ENCODE measurements at regions of chr4 and their contacts with region 1.

Region 1: DNA sequence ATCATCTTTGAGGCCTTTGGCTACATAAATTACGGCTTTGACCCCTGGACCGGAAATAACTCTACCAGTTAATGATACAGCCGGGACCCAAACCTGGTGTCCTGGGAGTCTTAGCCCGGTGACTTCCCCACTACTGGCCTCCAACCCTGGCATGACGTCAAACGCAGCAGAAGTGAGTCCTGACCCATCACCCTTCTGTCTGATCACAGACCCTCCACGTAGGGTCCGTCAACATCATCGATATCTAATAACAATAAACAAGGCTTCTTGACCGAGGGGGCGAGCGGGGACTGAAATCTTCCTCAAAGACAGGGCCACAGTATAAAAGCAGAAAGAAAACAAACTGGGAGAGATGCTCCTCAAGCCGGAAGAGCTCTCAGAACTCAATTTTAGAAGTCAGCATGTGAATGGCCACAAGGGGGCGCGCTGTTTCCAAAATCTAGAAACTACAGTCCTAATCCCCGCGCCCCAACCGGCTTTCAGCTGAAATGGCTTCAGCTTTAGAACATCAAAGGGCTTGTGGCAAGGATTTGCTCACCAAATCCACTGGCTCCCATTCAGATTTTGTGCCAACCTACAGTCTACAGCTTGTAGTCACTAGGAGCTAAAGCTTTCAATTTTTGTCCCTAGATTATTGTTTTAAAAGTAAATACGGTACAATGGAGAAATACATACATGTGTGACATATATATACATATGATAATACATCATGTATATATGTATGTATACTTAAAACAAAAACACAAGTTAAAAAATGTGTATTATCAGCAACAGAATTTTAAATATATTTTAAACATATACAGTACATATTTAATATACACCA is 46.4 kb upstream of the ENPP6 start:
- DNase-seq: peak; percentile 83 to 97 (median 93)
- ATAC-seq: peak; percentile 57
- H3K4me3 ChIP-seq: no peak overlapping the region
- H3K4me3 Mint-ChIP-seq: no peak overlapping the region
- H3K27ac ChIP-seq: no peak overlapping the region
- H3K27ac Mint-ChIP-seq: no peak overlapping the region
- H3K4me1 ChIP-seq: peaks cover 7% of the 10 kb centered on the region
- H3K4me1 Mint-ChIP-seq: peaks cover 29% of the 10 kb centered on the region
- H3K27me3 ChIP-seq: no peaks in the 10 kb centered on the region
- H3K27me3 Mint-ChIP-seq: no peaks in the 10 kb centered on the region
- CTCF ChIP-seq: peak; percentile 73

Region 2: GRCh38 chr4:183504064-183504929 is 759.8 kb before region 1 on chr4:
- CTCF ChIA-PET with region 1: no interaction called
- POLR2A ChIA-PET with region 1: no interaction called
- intact Hi-C with region 1: loop called in 1 of 2 experiments (anchors 10 kb)
- DNase-seq: peak; percentile 99 to 100 (median 99)
- ATAC-seq: peak; percentile 78
- H3K4me3 ChIP-seq: peak overlapping the region; percentile 95 to 98
- H3K4me3 Mint-ChIP-seq: peak overlapping the region; percentile 98
- H3K27ac ChIP-seq: peak overlapping the region; percentile 84 to 98
- H3K27ac Mint-ChIP-seq: peak overlapping the region; percentile 99
- H3K4me1 ChIP-seq: peaks cover 14% of the 10 kb centered on the region
- H3K4me1 Mint-ChIP-seq: peaks cover 34% of the 10 kb centered on the region
- H3K27me3 ChIP-seq: no peaks in the 10 kb centered on the region
- H3K27me3 Mint-ChIP-seq: no peaks in the 10 kb centered on the region
- CTCF ChIP-seq: no peak

Region 3: DNA sequence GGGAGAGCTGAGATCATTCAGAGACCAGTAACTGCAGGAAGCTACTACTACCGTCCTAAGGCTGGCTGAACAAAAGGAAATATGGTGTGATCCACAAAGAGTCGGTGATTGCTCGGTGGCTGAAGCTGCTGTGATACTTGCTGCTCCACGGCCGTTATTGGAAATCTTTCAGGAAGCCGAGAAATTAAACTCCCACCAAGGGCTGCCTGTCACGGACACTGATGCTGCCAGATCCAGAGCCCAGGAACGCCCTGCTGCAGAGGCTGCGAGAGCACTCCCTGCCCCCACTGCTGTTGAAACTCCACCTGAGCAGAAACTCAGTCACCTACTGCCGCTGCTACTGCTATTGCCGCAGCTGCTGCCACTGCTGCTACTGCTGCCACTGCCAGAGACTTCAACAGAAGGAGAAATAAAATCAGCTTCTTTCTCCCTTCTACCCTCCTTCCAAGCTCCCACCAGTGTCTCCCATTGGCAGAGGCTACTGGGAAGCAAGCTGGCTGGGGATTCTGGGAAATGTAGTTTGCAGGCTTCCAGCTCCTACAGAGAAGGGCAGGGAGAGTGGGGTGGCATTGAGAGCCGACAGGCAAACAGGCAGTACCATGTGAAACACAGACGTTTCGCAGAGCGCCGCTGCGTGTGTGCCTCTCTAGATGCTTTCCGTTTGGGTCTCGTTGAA is 79.5 kb after region 1 on chr4:
- CTCF ChIA-PET with region 1: interaction called, 5 read pairs
- POLR2A ChIA-PET with region 1: no interaction called
- intact Hi-C with region 1: loop called in 1 of 2 experiments (anchors 1 kb)
- DNase-seq: peak in 8 of 9 experiments; percentile 7 to 67 (median 44)
- ATAC-seq: peak; percentile 81
- H3K4me3 ChIP-seq: peak overlapping the region; percentile 56 to 68
- H3K4me3 Mint-ChIP-seq: peak overlapping the region; percentile 86
- H3K27ac ChIP-seq: no peak overlapping the region
- H3K27ac Mint-ChIP-seq: peak overlapping the region; percentile 43
- H3K4me1 ChIP-seq: peaks cover 5% of the 10 kb centered on the region
- H3K4me1 Mint-ChIP-seq: peaks cover 19% of the 10 kb centered on the region
- H3K27me3 ChIP-seq: no peaks in the 10 kb centered on the region
- H3K27me3 Mint-ChIP-seq: no peaks in the 10 kb centered on the region
- CTCF ChIP-seq: no peak

Region 4: GRCh38 chr4:184453365-184454160 is 189.4 kb after region 1 on chr4:
- CTCF ChIA-PET with region 1: no interaction called
- POLR2A ChIA-PET with region 1: no interaction called
- intact Hi-C with region 1: no loop called
- DNase-seq: peak in 7 of 9 experiments; percentile 16 to 82 (median 57)
- ATAC-seq: peak; percentile 98
- H3K4me3 ChIP-seq: no peak overlapping the region
- H3K4me3 Mint-ChIP-seq: peak overlapping the region; percentile 40
- H3K27ac ChIP-seq: peak overlapping the region; percentile 25 to 78
- H3K27ac Mint-ChIP-seq: peak overlapping the region; percentile 97
- H3K4me1 ChIP-seq: peaks cover 35% of the 10 kb centered on the region
- H3K4me1 Mint-ChIP-seq: peaks cover 84% of the 10 kb centered on the region
- H3K27me3 ChIP-seq: no peaks in the 10 kb centered on the region
- H3K27me3 Mint-ChIP-seq: no peaks in the 10 kb centered on the region
- CTCF ChIP-seq: no peak

Region 5: GRCh38 chr4:184474263-184475095 is 210.4 kb after region 1 on chr4 and contains the start of gene IRF2:
- CTCF ChIA-PET with region 1: interaction called, 5 read pairs
- POLR2A ChIA-PET with region 1: interaction called, 7 read pairs
- intact Hi-C with region 1: loop called (anchors 1 to 5 kb)
- DNase-seq: peak; percentile 91 to 99 (median 95)
- ATAC-seq: peak; percentile 82
- H3K4me3 ChIP-seq: peak within 1 kb of the TSS; percentile 78 to 93
- H3K4me3 Mint-ChIP-seq: peak within 1 kb of the TSS; percentile 98
- H3K27ac ChIP-seq: peak within 1 kb of the TSS; percentile 94 to 95
- H3K27ac Mint-ChIP-seq: peak within 1 kb of the TSS; percentile 99
- H3K4me1 ChIP-seq: peaks cover 38% of the 10 kb centered on the region
- H3K4me1 Mint-ChIP-seq: peaks cover 67% of the 10 kb centered on the region
- H3K27me3 ChIP-seq: no peaks in the 10 kb centered on the region
- H3K27me3 Mint-ChIP-seq: no peaks in the 10 kb centered on the region
- CTCF ChIP-seq: no peak
- total RNA-seq, gene IRF2: 7.9 to 9.3 TPM

Region 6: GRCh38 chr4:184733654-184734524 is 469.8 kb after region 1 on chr4 and contains the start of gene CENPU:
- CTCF ChIA-PET with region 1: interaction called, 12 read pairs
- POLR2A ChIA-PET with region 1: interaction called, 5 read pairs
- intact Hi-C with region 1: loop called (anchors 2 to 5 kb)
- DNase-seq: peak; percentile 87 to 97 (median 94)
- ATAC-seq: peak; percentile 95
- H3K4me3 ChIP-seq: peak within 1 kb of the TSS; percentile 74 to 79
- H3K4me3 Mint-ChIP-seq: peak within 1 kb of the TSS; percentile 87
- H3K27ac ChIP-seq: peak within 1 kb of the TSS; percentile 2 to 43
- H3K27ac Mint-ChIP-seq: peak within 1 kb of the TSS; percentile 84
- H3K4me1 ChIP-seq: peaks cover 8% of the 10 kb centered on the region
- H3K4me1 Mint-ChIP-seq: peaks cover 18% of the 10 kb centered on the region
- H3K27me3 ChIP-seq: no peaks in the 10 kb centered on the region
- H3K27me3 Mint-ChIP-seq: no peaks in the 10 kb centered on the region
- CTCF ChIP-seq: no peak
- total RNA-seq, gene CENPU: 3.4 TPM

Region 7: DNA sequence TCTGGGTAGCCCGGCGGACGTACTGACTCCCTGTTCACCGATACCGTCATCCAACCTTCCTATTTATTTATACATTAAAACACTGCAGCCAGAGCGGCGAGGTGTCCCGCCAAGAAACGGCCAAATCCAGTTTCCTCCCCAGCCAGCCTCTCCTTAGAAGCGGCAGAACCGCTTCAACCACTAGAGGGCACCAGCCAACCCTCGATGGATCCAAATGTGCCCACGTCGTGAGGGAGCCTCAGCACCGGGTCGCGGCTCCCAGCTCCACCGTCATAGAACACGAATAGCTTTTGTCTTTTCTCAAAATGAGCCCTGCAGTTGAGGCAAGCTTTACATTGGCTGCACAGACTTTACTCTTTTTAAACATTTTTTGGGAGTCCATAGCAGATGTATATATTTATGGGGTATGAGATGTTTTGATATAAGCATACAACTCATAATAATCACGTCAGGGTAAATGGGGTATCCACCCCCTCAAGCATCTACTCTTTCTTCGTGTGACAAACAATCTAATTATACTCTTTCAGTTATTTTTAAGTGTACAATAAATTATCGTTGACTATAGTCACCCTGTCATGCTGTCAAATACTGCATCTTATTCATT is 741.2 kb after region 1 on chr4:
- CTCF ChIA-PET with region 1: interaction called, 6 read pairs
- POLR2A ChIA-PET with region 1: no interaction called
- intact Hi-C with region 1: loop called in 1 of 2 experiments (anchors 10 kb)
- DNase-seq: peak; percentile 50 to 82 (median 76)
- ATAC-seq: peak; percentile 96
- H3K4me3 ChIP-seq: no peak overlapping the region
- H3K4me3 Mint-ChIP-seq: peak overlapping the region; percentile 50
- H3K27ac ChIP-seq: no peak overlapping the region
- H3K27ac Mint-ChIP-seq: no peak overlapping the region
- H3K4me1 ChIP-seq: no peaks in the 10 kb centered on the region
- H3K4me1 Mint-ChIP-seq: peaks cover 4% of the 10 kb centered on the region
- H3K27me3 ChIP-seq: peaks cover 2 to 6% of the 10 kb centered on the region in 2 experiments
- H3K27me3 Mint-ChIP-seq: peaks cover 51% of the 10 kb centered on the region
- CTCF ChIP-seq: peak; percentile 88

Region 8: DNA sequence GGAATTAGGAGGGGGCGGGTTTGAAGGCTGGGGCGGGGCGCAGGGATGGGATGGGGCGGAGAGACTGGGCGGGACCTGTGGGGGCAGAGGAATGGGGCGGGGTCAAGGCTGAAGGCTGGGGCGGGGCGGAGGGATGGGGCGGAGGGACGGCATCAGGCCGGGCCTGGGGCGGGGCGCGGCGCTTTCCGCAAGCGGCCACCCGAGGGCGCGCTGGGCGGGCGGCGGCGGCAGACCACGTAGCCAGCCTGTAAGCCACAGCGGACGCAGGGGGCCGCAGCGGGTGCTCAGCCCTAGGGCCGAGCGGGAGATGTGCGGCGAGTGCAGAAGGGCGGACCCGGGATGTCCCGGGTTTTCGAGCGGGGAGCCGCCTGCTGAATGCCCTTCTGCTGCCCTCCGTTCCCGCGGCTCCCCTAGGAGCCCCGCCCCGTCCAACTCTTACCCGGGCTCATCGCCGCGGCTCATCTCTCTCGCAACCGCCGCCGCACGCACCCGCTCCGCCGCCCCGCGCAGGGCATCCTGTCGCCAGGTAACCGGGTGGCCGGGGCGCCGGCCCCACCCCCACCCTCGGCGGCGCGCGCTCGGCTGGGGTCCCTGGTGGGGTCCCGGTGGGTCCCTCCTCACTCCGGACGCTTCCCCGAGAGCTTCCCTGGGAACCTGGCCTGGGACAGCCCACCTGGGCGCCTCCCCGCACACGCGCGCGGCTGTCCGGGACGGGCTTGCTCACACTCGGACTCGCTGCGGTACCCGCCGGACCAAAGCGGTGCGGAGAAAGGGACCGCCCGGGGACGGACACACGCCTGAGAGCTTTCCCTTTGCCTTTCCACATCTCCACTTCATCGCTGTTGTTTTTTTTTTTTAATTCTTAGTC is 1207.3 kb after region 1 on chr4 and contains the start of gene CCDC110:
- CTCF ChIA-PET with region 1: no interaction called
- POLR2A ChIA-PET with region 1: no interaction called
- intact Hi-C with region 1: loop called in 1 of 2 experiments (anchors 5 kb)
- DNase-seq: peak; percentile 79 to 96 (median 88)
- ATAC-seq: peak; percentile 95
- H3K4me3 ChIP-seq: peak within 1 kb of the TSS; percentile 60 to 85
- H3K4me3 Mint-ChIP-seq: peak within 1 kb of the TSS; percentile 93
- H3K27ac ChIP-seq: peak within 1 kb of the TSS; percentile 27 to 34
- H3K27ac Mint-ChIP-seq: peak within 1 kb of the TSS; percentile 67
- H3K4me1 ChIP-seq: peaks cover 13% of the 10 kb centered on the region
- H3K4me1 Mint-ChIP-seq: peaks cover 16% of the 10 kb centered on the region
- H3K27me3 ChIP-seq: no peaks in the 10 kb centered on the region
- H3K27me3 Mint-ChIP-seq: peaks cover 2% of the 10 kb centered on the region
- CTCF ChIP-seq: peak; percentile 64
- total RNA-seq, gene CCDC110: 0.57 TPM in 1 of 2 experiments, not detected in the other

Measured in CD8-positive, alpha-beta T cell (primary cell).